ENCODE measurements at regions of chr2 and their contacts with region 1.

Region 1: DNA sequence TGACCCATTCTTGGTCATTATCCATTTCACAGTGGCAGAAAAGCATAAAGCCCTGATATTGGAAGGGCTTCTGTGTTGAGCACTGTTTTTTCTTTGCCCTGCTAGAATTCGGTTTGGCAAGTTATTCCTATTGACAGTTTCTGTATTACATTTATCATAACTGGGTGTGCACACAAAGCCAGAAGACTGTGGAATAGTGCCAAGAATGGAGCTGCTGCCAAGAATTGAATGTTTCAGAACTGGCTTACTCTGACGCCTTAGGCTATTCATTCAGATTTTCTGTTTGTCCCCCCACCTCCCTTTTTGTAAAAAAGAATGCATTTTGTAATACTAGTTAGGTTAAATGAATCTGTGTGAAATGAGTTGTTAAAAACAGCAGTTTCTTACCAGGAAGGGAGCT is 12.7 kb downstream of the KDM3A start:
- DNase-seq: no peak
- ATAC-seq: no peak
- H3K4me3 ChIP-seq: no peak overlapping the region
- H3K27ac ChIP-seq: no peak overlapping the region
- H3K4me1 ChIP-seq: no peaks in the 10 kb centered on the region
- H3K27me3 ChIP-seq: no peaks in the 10 kb centered on the region
- CTCF ChIP-seq: no peak
- EP300 ChIP-seq: no peak
- POLR2A ChIP-seq: no peak
- RAD21 ChIP-seq: no peak

Region 2: DNA sequence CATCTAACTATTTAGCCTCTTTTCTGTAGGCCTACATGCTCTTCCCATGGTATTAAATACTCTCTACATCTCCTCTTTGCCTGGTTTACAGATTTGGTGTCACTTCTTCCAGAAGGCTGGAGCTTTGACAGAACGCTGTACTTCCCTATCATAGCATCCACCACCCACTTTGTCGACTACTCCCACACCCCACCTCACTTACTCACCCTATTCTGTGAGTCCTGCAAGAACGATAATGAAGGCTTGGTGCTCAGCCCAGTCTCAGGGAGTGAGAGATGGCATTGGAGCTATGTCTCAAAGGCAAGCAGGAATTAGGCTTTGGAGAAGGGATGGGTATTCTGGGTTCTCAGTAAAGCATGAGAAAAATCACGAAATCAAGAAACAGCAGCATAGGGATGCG is 32.9 kb before region 1 on chr2:
- CTCF ChIA-PET with region 1: no interaction called
- POLR2A ChIA-PET with region 1: no interaction called
- RAD21 ChIA-PET with region 1: no interaction called
- SMC1A ChIA-PET with region 1: no interaction called
- in situ Hi-C with region 1: no loop called
- intact Hi-C with region 1: no loop called
- DNase-seq: no peak
- ATAC-seq: no peak
- H3K4me3 ChIP-seq: no peak overlapping the region
- H3K27ac ChIP-seq: no peak overlapping the region
- H3K4me1 ChIP-seq: no peaks in the 10 kb centered on the region
- H3K27me3 ChIP-seq: no peaks in the 10 kb centered on the region
- CTCF ChIP-seq: no peak
- EP300 ChIP-seq: no peak
- POLR2A ChIP-seq: no peak
- RAD21 ChIP-seq: no peak

Region 3: GRCh38 chr2:86468162-86469033 is 14.6 kb after region 1 on chr2:
- CTCF ChIA-PET with region 1: interaction called, 6 read pairs
- POLR2A ChIA-PET with region 1: interaction called, 6 read pairs
- RAD21 ChIA-PET with region 1: no interaction called
- SMC1A ChIA-PET with region 1: interaction called, 16 read pairs
- in situ Hi-C with region 1: no loop called
- intact Hi-C with region 1: no loop called
- DNase-seq: no peak
- ATAC-seq: no peak
- H3K4me3 ChIP-seq: no peak overlapping the region
- H3K27ac ChIP-seq: no peak overlapping the region
- H3K4me1 ChIP-seq: no peaks in the 10 kb centered on the region
- H3K27me3 ChIP-seq: no peaks in the 10 kb centered on the region
- CTCF ChIP-seq: no peak
- EP300 ChIP-seq: no peak
- POLR2A ChIP-seq: no peak
- RAD21 ChIP-seq: no peak

Region 4: DNA sequence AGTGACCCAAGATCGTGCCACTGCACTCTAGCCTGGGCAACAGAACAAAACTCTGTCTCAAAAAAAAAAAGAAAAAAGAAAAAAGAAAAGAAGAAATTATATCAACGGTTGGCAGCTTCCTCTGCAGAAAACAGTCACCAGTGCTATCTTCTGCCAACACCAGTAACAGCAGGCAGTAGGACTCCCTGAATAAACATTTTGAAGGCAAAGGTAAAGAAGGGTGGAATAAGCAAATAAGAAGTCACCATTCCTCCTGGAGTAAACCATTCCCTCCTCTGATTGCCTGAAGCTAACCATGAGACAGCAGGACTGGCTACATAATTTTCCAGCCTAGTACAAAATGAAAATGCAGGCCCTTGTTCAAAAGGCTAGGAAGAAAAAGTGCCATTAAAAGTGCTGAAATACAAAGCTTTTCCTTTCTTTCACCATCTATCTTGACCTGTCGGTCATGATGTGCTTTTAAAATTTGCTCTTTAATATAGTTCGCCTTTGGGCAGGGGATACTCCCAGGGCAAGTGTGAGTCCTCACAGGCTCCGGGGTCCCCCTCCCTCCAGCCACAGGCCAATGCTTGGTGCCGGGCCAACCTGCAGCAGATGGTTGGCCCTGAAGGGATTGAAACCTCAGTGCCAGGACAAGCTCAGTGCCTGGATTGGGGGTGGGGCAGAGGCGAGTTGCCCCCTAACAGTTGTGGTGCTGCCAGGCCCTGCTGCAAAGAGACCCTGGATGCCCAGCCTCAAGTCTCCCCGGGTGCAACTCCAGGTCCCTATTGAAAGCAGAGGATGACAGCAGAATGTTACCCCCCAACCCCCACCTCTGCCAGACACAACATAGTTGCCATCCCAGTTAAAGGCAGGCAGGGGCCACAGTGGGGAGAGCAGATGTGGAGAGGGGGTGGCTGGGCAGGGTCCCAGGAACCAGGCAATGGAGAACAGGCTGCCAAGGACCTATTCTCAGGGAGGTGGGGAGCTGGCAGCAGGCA is 179.1 kb after region 1 on chr2:
- CTCF ChIA-PET with region 1: no interaction called
- POLR2A ChIA-PET with region 1: no interaction called
- RAD21 ChIA-PET with region 1: no interaction called
- SMC1A ChIA-PET with region 1: no interaction called
- in situ Hi-C with region 1: no loop called
- intact Hi-C with region 1: no loop called
- DNase-seq: no peak
- ATAC-seq: no peak
- H3K4me3 ChIP-seq: no peak overlapping the region
- H3K27ac ChIP-seq: no peak overlapping the region
- H3K4me1 ChIP-seq: no peaks in the 10 kb centered on the region
- H3K27me3 ChIP-seq: no peaks in the 10 kb centered on the region
- CTCF ChIP-seq: no peak
- EP300 ChIP-seq: no peak
- POLR2A ChIP-seq: no peak
- RAD21 ChIP-seq: no peak